AG04450 (cell line): ENCODE measurements at regions of chr1 and their contacts with region 1.

Region 1: GRCh38 chr1:60978421-60979357 is 103.7 kb upstream of the NFIA start:
- DNase-seq: no peak
- H3K4me3 ChIP-seq: no peak overlapping the region
- H3K27ac ChIP-seq: no peak overlapping the region
- H3K27me3 ChIP-seq: no peaks in the 10 kb centered on the region
- CTCF ChIP-seq: peak; percentile 79

Region 2: GRCh38 chr1:60825593-60825992 is 153.1 kb before region 1 on chr1:
- CTCF ChIA-PET with region 1: no interaction called
- POLR2A ChIA-PET with region 1: no interaction called
- DNase-seq: no peak
- H3K4me3 ChIP-seq: no peak overlapping the region
- H3K27ac ChIP-seq: no peak overlapping the region
- H3K27me3 ChIP-seq: no peaks in the 10 kb centered on the region
- CTCF ChIP-seq: no peak

Region 3: DNA sequence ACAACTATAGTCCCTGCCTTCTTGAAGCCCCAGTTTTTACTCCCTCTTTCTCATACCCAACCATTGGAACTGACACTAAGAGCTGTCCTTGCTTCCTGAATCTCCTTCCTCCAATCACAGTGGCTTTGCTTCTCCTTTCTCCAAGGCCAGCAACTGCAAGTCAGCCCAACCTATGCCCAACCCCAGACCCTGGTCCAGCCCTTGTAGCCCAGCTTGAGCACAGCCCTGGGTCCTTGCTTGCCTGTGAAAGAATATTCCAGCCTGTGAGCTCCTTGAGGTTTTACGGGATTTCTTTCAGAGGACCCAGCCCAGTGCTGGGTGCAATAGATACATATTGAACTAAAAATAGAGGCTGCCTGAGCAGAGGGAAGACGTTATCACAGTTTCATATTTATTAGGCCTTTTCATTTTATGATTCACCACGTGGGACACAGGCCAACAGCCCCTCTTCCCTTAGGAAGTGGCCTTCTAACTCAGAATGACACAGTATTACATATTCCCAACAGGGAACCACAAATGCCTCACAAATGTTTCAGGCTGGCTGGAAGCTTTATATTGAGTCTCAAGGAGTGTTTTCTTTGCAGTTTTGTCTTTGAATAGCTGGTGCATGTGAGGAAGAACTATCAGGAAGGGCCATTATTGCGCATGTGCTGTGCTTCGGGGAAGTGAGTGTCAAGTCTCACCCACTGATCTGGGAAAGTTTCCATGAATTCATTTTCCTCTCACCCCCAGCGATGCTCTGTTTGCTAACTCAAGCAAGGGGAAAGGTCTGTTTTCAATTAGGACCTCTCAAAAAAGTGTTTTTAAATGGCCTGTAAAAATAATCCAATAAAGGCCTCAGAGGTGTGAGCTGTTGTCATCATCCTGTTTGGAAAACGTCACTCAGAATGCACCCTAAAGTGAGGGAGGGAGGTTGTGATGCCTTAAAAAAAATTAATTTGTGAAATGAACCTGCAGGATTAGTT is 11.3 kb after region 1 on chr1:
- CTCF ChIA-PET with region 1: interaction called, 21 read pairs
- POLR2A ChIA-PET with region 1: no interaction called
- DNase-seq: peak; percentile 37
- H3K4me3 ChIP-seq: no peak overlapping the region
- H3K27ac ChIP-seq: no peak overlapping the region
- H3K27me3 ChIP-seq: peaks cover 4% of the 10 kb centered on the region
- CTCF ChIP-seq: no peak

Region 4: DNA sequence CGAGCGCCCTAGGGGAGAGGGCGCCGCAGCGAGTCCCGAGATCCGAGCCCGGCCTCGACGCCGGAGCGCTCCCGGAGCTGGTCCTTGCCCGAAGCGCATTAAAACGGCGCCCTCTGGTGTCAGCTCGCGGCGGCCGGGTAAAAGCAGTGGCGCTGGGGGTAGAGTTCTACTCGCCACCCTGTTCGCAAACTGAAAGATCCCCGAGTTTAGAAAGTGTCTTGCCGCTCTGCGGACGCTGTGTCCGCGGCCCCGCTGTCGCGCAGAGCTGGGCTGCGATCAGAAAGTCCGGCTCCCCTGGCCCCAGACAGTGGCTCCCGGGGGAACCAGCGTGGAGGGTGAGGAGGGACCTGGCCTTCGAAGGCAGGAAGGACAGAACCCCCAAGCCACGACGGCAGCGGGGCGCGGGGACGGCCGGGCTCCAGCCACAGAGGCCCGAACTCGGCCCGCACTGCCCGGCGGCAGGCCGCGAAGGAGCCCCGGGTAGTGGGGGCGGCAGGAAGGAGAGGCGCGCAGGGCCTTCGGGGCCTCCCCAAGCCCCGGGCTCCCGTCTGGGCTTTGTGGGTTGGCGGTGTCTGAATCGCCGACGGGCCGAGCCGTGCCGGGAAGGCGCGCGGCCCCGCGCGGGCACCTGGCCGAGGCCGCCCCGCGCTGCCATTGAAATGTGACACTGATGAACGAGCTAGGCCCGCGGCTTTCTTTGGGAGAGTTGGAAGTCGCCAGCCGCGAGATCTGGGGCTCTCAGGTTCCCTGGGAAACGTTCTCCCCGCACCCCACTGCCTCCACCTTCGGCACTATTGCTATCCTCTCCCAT is 64.5 kb after region 1 on chr1:
- CTCF ChIA-PET with region 1: interaction called, 29 read pairs
- POLR2A ChIA-PET with region 1: no interaction called
- DNase-seq: peak; percentile 23
- H3K4me3 ChIP-seq: peak overlapping the region; percentile 47
- H3K27ac ChIP-seq: no peak overlapping the region
- H3K27me3 ChIP-seq: peaks cover 25% of the 10 kb centered on the region
- CTCF ChIP-seq: peak; percentile 81

Region 5: DNA sequence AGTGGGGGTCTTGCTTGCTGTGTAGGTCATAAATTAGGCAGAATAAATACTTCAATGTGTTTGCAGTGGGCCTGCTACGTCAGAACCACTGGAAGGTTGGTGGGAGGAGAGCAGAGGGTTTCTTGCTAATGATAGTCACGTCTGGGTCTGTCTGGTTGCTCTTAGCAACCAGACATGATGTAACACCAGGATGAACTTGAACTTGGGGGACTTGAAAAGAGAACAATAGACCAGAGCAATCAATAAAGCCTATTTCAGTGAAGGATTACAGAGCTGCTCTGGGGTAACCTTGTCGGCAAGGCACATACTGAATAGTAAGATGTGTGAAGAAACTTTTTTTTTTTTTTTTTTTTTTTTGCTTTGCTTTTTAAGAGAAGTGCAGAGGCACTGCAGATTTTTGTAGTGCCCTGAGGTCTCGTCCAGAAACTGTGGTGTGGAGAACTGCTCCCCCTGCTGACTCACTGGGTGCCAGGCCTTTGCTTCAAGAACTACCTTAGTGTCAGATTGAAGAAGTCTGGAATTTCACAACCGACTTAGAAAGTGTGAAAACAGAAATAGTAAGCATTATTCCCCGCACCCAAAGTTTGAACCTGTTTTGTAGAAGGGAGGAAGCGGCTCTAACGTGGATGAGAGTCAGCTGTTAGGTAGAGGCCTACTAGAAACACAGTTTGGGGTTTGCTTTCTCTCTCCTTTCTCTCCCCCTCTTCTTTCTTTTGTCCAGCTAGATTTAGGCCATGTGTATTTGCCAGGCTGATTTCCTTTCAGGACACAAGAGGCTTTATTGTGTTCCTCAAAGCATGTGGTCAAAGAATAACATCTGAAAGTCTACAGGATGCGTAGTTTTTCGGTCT is 474.6 kb after region 1 on chr1:
- CTCF ChIA-PET with region 1: interaction called, 68 read pairs
- POLR2A ChIA-PET with region 1: no interaction called
- DNase-seq: peak; percentile 71
- H3K4me3 ChIP-seq: no peak overlapping the region
- H3K27ac ChIP-seq: no peak overlapping the region
- H3K27me3 ChIP-seq: no peaks in the 10 kb centered on the region
- CTCF ChIP-seq: peak; percentile 93

Region 6: DNA sequence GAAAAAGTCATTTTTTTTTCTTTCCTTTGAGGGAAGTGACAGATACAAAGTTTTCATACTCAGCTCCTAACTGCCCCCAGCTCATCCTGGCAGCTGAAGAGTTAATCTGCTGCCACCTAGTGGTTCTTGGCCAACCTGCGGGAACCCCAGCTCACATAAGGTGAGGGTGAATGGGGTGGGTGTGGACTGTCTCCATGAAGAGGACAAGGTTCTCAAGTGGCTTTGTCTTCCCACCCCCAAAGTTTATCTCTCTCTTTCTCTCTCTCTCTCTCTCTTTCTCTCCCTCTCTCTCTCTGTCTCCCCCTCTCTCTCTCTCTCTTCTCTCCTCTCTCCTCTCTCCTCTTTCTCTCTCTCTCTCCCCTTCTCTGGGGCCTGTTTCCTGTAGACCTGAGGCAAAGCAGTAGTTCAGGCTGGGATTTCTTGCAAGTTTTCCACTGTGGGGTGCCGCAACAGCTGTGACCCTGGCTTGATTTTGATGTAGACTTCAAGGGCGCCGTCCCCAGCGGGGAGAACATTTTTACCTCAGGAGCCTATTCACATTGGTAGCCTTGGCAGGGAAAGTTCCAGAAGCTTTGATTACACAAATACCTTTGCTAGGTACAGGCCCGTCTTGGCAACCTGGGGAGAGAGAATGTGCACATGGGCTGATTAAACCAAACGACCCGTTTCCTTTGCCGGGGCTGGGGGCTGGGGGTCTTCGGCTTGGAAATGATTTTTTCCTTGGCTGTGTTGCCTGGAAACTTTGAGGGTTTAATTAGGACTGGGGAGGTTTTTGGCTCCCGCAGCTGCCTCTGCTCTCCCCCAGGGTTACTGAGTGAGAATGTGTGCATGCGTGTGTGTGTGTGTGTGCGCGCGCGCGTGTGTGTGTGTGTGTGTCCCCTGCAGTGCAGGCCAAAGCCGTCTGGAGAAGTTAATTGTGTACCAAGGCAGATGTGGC is 610.3 kb after region 1 on chr1:
- CTCF ChIA-PET with region 1: interaction called, 22 read pairs
- POLR2A ChIA-PET with region 1: no interaction called
- DNase-seq: peak; percentile 6
- H3K4me3 ChIP-seq: no peak overlapping the region
- H3K27ac ChIP-seq: no peak overlapping the region
- H3K27me3 ChIP-seq: peaks cover 2% of the 10 kb centered on the region
- CTCF ChIP-seq: peak; percentile 83